ENCODE measurements at regions of chr13 and their contacts with region 1.

Region 1: GRCh38 chr13:28273919-28274318 is 135.6 kb downstream of the PAN3 start:
- DNase-seq: no peak
- ATAC-seq: no peak
- H3K4me3 Mint-ChIP-seq: no peak overlapping the region
- H3K27ac Mint-ChIP-seq: no peak overlapping the region
- H3K4me1 Mint-ChIP-seq: peaks cover 4% of the 10 kb centered on the region
- H3K27me3 Mint-ChIP-seq: no peaks in the 10 kb centered on the region

Region 2: DNA sequence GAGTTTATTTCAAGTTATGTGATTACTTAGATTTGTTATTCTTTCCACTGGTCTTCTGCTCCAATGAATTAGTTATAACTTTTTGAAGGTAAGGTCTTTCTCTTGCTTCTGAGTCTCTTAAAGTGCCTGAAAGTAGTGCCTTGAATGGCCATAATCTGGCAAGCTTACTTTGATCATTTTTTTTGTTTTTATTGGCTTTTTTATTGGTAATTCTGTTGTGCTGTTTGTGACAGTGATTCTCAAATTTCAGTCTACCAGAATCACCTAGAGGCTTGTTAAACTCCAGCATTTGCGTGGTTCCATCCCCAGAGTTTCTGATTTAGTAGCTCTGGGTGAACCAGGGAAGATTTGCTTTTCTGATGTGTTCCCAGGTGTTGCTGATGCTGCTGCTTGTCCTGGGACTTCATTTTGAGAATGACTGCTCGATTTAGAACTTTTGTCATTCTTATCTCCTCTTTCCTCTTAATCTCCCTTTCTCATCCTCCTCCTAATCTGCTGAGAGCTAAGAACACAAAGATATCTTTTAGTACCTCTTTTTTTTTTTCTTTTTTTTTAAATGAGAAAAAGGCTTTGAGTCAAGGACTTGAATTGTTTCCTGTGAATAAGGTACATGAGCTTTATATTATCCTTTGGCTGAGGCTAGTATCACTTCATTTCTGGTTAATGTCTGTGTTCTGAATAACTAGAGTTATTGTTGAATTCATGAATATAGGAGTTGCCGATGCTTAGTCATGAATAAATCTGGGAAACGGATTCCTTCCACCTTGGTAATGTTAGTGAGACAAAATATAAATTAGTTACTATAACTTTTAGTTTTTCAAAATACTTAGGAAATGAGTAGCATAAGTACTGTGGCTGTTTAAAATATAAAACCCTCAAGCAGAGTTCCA is 44.2 kb before region 1 on chr13:
- CTCF ChIA-PET with region 1: no interaction called
- POLR2A ChIA-PET with region 1: no interaction called
- intact Hi-C with region 1: loop called in 1 of 2 experiments (anchors 5 kb)
- DNase-seq: no peak
- ATAC-seq: no peak
- H3K4me3 Mint-ChIP-seq: no peak overlapping the region
- H3K27ac Mint-ChIP-seq: no peak overlapping the region
- H3K4me1 Mint-ChIP-seq: peaks cover 3% of the 10 kb centered on the region
- H3K27me3 Mint-ChIP-seq: no peaks in the 10 kb centered on the region

Measured in activated CD4-positive, alpha-beta T cell treated with anti-CD3 and anti-CD28 coated beads for 36 hours (primary cell).